T-cell (primary cell): ENCODE measurements at regions of chr6 and their contacts with region 1.

Region 1: DNA sequence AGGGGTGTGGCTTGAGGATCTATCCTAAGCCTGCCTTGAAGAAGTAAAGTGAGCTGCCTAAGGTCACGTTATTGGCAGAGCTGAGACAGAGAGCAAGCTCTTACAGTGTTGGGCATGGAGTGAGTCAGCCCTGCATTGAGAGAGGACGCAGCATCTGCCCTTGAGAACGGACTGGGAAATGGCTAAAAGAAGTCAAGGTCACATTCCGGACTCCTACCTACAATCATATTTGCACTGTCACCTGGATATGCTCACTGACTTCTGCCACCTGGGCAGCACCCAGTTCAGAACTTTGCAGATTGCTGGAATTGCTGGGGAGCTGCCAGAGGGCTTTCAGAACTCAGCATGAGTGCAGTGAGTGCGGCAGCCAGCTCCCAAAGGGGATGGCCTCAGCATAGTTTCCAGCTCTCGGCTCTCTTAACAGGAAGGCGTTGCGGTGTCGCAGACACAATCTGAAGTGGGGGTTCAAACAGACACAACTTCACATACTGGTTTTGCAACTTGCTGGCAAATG is 199.3 kb upstream of the SGK1 start:
- DNase-seq: peak in 4 of 35 experiments; percentile 5 to 35 (median 16)
- ATAC-seq: peak in 1 of 4 experiments; percentile 58
- H3K4me3 ChIP-seq: no peak overlapping the region
- H3K4me3 Mint-ChIP-seq: peak overlapping the region in 1 of 3 donors; percentile 12
- H3K27ac ChIP-seq: no peak overlapping the region
- H3K27ac Mint-ChIP-seq: no peak overlapping the region
- H3K4me1 ChIP-seq: peaks cover 12 to 26% of the 10 kb centered on the region in 2 experiments
- H3K4me1 Mint-ChIP-seq: peaks cover 27 to 44% (median 29%) of the 10 kb centered on the region in 3 donors
- H3K27me3 ChIP-seq: no peaks in the 10 kb centered on the region
- H3K27me3 Mint-ChIP-seq: no peaks in the 10 kb centered on the region

Region 2: DNA sequence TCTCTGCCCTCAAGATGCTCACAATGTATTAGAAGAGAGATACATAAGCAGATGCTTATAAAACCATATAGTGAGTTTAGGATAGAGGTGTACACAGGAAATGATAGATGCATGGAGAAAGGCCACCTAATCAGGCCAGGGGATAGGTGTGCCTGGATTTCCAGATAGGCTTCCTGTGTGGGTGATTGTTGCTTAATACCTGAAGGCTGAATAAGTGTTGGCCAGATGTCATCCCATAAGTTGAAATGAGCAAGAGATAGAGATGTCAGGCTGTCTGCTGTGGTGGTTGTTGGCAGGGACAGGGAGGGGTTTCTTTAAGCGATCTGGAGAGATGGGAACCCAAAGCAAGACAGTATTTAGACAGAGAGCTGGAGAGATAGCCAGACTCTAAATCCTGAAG is 89.5 kb before region 1 on chr6:
- CTCF ChIA-PET with region 1: no interaction called
- POLR2A ChIA-PET with region 1: no interaction called
- DNase-seq: no peak
- ATAC-seq: no peak
- H3K4me3 ChIP-seq: no peak overlapping the region
- H3K4me3 Mint-ChIP-seq: no peak overlapping the region
- H3K27ac ChIP-seq: no peak overlapping the region
- H3K27ac Mint-ChIP-seq: no peak overlapping the region
- H3K4me1 ChIP-seq: peaks cover 0 to 2% of the 10 kb centered on the region in 2 experiments
- H3K4me1 Mint-ChIP-seq: peaks cover 3 to 7% (median 4%) of the 10 kb centered on the region in 3 donors
- H3K27me3 ChIP-seq: no peaks in the 10 kb centered on the region
- H3K27me3 Mint-ChIP-seq: no peaks in the 10 kb centered on the region

Region 3: GRCh38 chr6:134453870-134454510 is 63.2 kb before region 1 on chr6:
- CTCF ChIA-PET with region 1: no interaction called
- POLR2A ChIA-PET with region 1: no interaction called
- DNase-seq: no peak
- ATAC-seq: no peak
- H3K4me3 ChIP-seq: no peak overlapping the region
- H3K4me3 Mint-ChIP-seq: no peak overlapping the region
- H3K27ac ChIP-seq: no peak overlapping the region
- H3K27ac Mint-ChIP-seq: no peak overlapping the region
- H3K4me1 ChIP-seq: peaks cover 3% of the 10 kb centered on the region in 2 experiments
- H3K4me1 Mint-ChIP-seq: peaks cover 4 to 11% (median 8%) of the 10 kb centered on the region in 3 donors
- H3K27me3 ChIP-seq: no peaks in the 10 kb centered on the region
- H3K27me3 Mint-ChIP-seq: no peaks in the 10 kb centered on the region

Region 4: DNA sequence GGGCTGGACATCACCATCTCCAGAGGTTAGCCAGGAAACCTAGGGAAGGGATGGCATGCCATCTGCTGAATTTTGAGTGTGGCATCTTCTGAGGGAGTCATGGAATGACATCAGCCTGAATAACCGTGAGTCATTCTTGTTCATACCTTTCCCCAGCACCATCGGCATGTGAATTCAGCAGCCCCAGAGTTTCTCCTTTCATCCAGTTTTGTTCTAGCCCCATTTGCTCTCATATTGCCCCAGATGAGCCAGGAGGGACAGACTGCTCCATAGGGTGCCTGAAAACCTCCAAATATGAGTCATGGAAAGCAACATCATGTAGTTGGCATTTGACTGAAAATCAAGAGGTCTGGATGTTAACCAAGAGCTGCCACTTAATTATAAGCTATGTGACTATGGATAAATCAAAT is 19.9 kb after region 1 on chr6:
- CTCF ChIA-PET with region 1: interaction called in 1 of 2 experiments, 14 read pairs
- POLR2A ChIA-PET with region 1: no interaction called
- DNase-seq: no peak
- ATAC-seq: no peak
- H3K4me3 ChIP-seq: no peak overlapping the region
- H3K4me3 Mint-ChIP-seq: no peak overlapping the region
- H3K27ac ChIP-seq: no peak overlapping the region
- H3K27ac Mint-ChIP-seq: no peak overlapping the region
- H3K4me1 ChIP-seq: peaks cover 22 to 29% of the 10 kb centered on the region in 2 experiments
- H3K4me1 Mint-ChIP-seq: peaks cover 31 to 39% (median 38%) of the 10 kb centered on the region in 3 donors
- H3K27me3 ChIP-seq: peaks cover 0 to 3% of the 10 kb centered on the region in 2 experiments
- H3K27me3 Mint-ChIP-seq: peaks cover 0 to 2% of the 10 kb centered on the region in 2 donors